ENCODE measurements at regions of chr17 and their contacts with region 1.

Region 1: DNA sequence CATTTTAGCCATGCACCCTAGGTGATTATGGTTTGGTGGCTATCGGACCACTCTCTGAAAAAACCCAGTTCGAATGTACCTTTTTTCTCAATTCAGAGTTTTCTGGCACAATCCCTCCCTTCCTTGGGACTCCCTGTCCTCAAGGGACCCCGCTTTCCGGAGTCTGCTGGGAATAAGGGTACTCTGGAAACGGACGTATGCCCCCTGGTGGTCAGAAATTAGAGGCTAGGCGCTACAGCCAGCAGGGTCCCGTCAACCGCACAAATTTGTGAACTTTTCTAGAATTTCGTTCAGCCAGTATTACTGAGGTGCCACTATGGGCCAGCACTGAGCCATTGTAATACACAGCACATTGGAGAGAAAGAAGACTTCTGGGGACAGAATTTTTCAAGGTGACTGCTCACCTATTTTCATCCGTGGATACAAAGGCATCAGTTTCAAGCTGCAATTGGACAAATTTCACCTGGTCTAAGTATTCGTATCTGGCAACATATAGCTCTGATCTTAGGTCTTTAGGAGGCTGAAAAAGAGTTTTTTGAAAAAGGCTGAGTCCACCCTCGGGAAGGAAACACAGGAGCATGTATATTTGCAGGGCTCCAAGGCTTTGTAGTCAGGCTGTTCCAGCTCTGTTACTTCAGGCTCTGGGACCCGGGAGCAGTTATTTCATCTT is 27.1 kb upstream of the CRYBA1 start:
- DNase-seq: peak; percentile 69 to 79 (median 75)
- ATAC-seq: peak; percentile 67 to 90 (median 88)
- H3K4me3 ChIP-seq: no peak overlapping the region
- H3K27ac ChIP-seq: no peak overlapping the region
- H3K4me1 ChIP-seq: peaks cover 0 to 10% (median 5%) of the 10 kb centered on the region in 12 donors
- H3K27me3 ChIP-seq: no peaks in the 10 kb centered on the region
- CTCF ChIP-seq: peak; percentile 88 to 97 (median 94)
- POLR2A ChIP-seq: no peak

Region 2: GRCh38 chr17:28812091-28812747 is 407.3 kb before region 1 on chr17:
- intact Hi-C with region 1: no loop called
- DNase-seq: peak; percentile 98 to 99 (median 99)
- ATAC-seq: peak; percentile 100
- H3K4me3 ChIP-seq: peak overlapping the region; percentile 63 to 99 (median 90)
- H3K27ac ChIP-seq: peak overlapping the region; percentile 42 to 92 (median 87)
- H3K4me1 ChIP-seq: peaks cover 0 to 42% (median 22%) of the 10 kb centered on the region in 12 donors
- H3K27me3 ChIP-seq: no peaks in the 10 kb centered on the region
- CTCF ChIP-seq: no peak
- POLR2A ChIP-seq: peak in 1 of 2 donors; percentile 47

Region 3: GRCh38 chr17:28967221-28968140 is 252.0 kb before region 1 on chr17:
- intact Hi-C with region 1: loop called in 1 of 10 experiments (anchors 10 kb)
- DNase-seq: peak in 1 of 5 donors; percentile 37
- ATAC-seq: peak in 1 of 4 donors; percentile 3
- H3K4me3 ChIP-seq: no peak overlapping the region
- H3K27ac ChIP-seq: peak overlapping the region in 1 of 12 donors; percentile 69
- H3K4me1 ChIP-seq: peaks cover 0 to 42% (median 20%) of the 10 kb centered on the region in 12 donors
- H3K27me3 ChIP-seq: peaks cover 0 to 8% (median 0%) of the 10 kb centered on the region in 9 donors
- CTCF ChIP-seq: no peak
- POLR2A ChIP-seq: no peak

Region 4: GRCh38 chr17:29180034-29180787 is 39.3 kb before region 1 on chr17 and contains the start of gene MYO18A:
- intact Hi-C with region 1: loop called in 4 of 10 experiments (anchors 5 kb)
- DNase-seq: peak; percentile 81 to 92 (median 84)
- ATAC-seq: peak; percentile 59 to 89 (median 82)
- H3K4me3 ChIP-seq: peak within 1 kb of the TSS; percentile 39 to 87 (median 67)
- H3K27ac ChIP-seq: peak within 1 kb of the TSS; percentile 68 to 95 (median 88)
- H3K4me1 ChIP-seq: peaks cover 6 to 56% (median 47%) of the 10 kb centered on the region in 12 donors
- H3K27me3 ChIP-seq: no peaks in the 10 kb centered on the region
- CTCF ChIP-seq: peak; percentile 61 to 93 (median 85)
- POLR2A ChIP-seq: peak in 1 of 2 donors; percentile 23
- total RNA-seq, gene MYO18A: 241 to 340 (median 300) TPM

Measured in heart left ventricle (tissue), 16 donors.